HCT116 (cell line): ENCODE measurements at regions of chr6 and their contacts with region 1.

Region 1: DNA sequence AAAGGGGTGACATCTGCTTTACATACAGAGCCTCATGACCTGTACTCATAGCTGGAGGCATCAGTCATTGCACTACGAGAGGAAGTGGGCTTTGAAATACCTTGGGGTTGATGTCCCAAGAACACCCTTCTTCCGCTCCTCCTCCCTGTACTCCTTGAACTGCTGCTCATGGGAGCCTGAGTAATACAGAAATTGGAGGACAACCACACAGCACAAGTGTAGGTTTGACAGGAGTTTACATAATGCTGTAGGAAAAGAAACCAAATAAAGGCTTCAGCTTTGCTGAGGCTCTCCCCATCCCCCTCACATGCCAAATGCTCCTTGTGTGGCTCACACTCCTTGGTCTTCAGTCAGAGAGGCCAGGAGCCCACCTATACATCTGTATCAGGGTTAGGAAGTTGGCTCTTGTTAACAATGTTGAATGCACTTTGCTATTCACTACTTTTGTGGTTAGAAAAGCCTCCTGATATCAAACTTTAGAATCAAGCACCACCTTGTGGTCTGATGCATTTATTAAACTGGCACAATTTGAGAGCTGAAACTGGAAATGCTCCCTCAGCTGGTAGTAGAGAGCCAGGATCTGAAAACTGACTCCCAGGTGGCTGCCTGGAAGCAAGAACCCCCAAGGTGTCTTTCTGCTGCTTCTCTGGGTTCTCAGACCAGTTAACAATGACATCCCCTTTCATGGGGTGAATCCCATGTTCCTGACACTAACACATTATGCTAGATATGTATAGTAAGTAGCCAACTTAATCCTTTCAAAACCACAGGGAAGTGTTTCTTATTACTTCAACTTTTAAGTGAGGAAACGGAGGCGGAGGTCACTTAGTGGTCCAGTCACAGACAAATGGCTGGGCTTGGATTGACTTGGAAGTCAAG is 56.2 kb upstream of the EDN1 start:
- DNase-seq: peak; percentile 63
- ATAC-seq: peak; percentile 87
- H3K4me3 ChIP-seq: no peak overlapping the region
- H3K27ac ChIP-seq: no peak overlapping the region
- H3K4me1 ChIP-seq: no peaks in the 10 kb centered on the region
- H3K27me3 ChIP-seq: no peaks in the 10 kb centered on the region
- CTCF ChIP-seq: peak; percentile 74 to 99 (median 77)
- POLR2A ChIP-seq: no peak
- RAD21 ChIP-seq: peak; percentile 87

Region 2: GRCh38 chr6:11585426-11586016 is 648.4 kb before region 1 on chr6:
- CTCF ChIA-PET with region 1: interaction called, 4 read pairs
- POLR2A ChIA-PET with region 1: no interaction called
- RAD21 ChIA-PET with region 1: no interaction called
- intact Hi-C with region 1: loop called (anchors 1 kb)
- DNase-seq: peak; percentile 44
- ATAC-seq: peak; percentile 63; the same call in 1 of the 2 replicates
- H3K4me3 ChIP-seq: no peak overlapping the region
- H3K27ac ChIP-seq: no peak overlapping the region
- H3K4me1 ChIP-seq: no peaks in the 10 kb centered on the region
- H3K27me3 ChIP-seq: no peaks in the 10 kb centered on the region
- CTCF ChIP-seq: peak; percentile 48 to 76 (median 71)
- POLR2A ChIP-seq: no peak
- RAD21 ChIP-seq: peak; percentile 75

Region 3: GRCh38 chr6:11653028-11653583 is 580.8 kb before region 1 on chr6:
- CTCF ChIA-PET with region 1: interaction called, 31 read pairs
- POLR2A ChIA-PET with region 1: interaction called, 4 read pairs
- RAD21 ChIA-PET with region 1: interaction called, 4 to 6 read pairs
- intact Hi-C with region 1: loop called (anchors 1 kb)
- DNase-seq: no peak
- ATAC-seq: no peak
- H3K4me3 ChIP-seq: no peak overlapping the region
- H3K27ac ChIP-seq: no peak overlapping the region
- H3K4me1 ChIP-seq: peaks cover 6 to 19% of the 10 kb centered on the region in 2 experiments
- H3K27me3 ChIP-seq: no peaks in the 10 kb centered on the region
- CTCF ChIP-seq: no peak
- POLR2A ChIP-seq: no peak
- RAD21 ChIP-seq: no peak

Region 4: GRCh38 chr6:12011276-12012076 is 222.5 kb before region 1 on chr6:
- CTCF ChIA-PET with region 1: no interaction called
- POLR2A ChIA-PET with region 1: no interaction called
- RAD21 ChIA-PET with region 1: no interaction called
- intact Hi-C with region 1: loop called (anchors 10 kb)
- DNase-seq: peak; percentile 91
- ATAC-seq: peak; percentile 80
- H3K4me3 ChIP-seq: peak overlapping the region; percentile 72 to 79
- H3K27ac ChIP-seq: peak overlapping the region; percentile 52
- H3K4me1 ChIP-seq: peaks cover 26 to 42% of the 10 kb centered on the region in 2 experiments
- H3K27me3 ChIP-seq: no peaks in the 10 kb centered on the region
- CTCF ChIP-seq: no peak
- POLR2A ChIP-seq: no peak
- RAD21 ChIP-seq: 0 out of 2 replicates have a peak, but pooled peaks have one; percentile 2

Region 5: DNA sequence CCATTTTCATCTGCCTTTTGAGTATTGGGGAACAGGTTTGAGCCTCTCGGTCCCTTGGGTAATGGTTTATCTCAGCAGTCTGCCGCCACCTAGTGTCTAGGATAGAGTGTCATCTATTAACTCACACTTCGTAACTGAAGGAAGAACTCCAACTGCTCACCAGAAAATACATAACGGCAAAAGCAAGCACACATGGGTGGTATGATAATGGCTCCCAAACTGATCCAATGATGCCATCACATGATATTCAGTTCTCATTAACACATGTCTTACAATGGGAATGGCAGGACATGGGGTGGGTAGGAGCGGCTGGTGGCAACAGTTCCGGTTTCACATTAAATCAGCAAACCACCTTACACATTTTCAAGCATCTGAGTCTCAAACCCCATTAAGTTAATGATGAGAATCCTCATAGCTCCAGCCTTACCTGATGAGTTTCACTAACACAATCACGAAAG is 372.0 kb after region 1 on chr6:
- CTCF ChIA-PET with region 1: interaction called, 3 read pairs
- POLR2A ChIA-PET with region 1: no interaction called
- RAD21 ChIA-PET with region 1: no interaction called
- intact Hi-C with region 1: loop called (anchors 2 kb)
- DNase-seq: peak; percentile 65
- ATAC-seq: peak; percentile 95
- H3K4me3 ChIP-seq: peak overlapping the region in 1 of 2 experiments; percentile 6; a peak in 1 of 4 replicates
- H3K27ac ChIP-seq: no peak overlapping the region
- H3K4me1 ChIP-seq: no peaks in the 10 kb centered on the region; a peak in 1 of 4 replicates
- H3K27me3 ChIP-seq: no peaks in the 10 kb centered on the region
- CTCF ChIP-seq: peak; percentile 58 to 82 (median 68); a peak in 5 of 6 replicates
- POLR2A ChIP-seq: no peak
- RAD21 ChIP-seq: peak; percentile 84